ENCODE measurements at regions of chr7 and their contacts with region 1.

Region 1: GRCh38 chr7:25565949-25566348 is 337.7 kb upstream of the NPVF start:
- DNase-seq: peak; percentile 54
- H3K4me3 ChIP-seq: peak overlapping the region in 1 of 2 experiments; percentile 28; a peak in 1 of 4 replicates
- H3K27ac ChIP-seq: no peak overlapping the region
- H3K4me1 ChIP-seq: peaks cover 0 to 19% of the 10 kb centered on the region in 2 experiments; a peak in 2 of 4 replicates
- H3K27me3 ChIP-seq: no peaks in the 10 kb centered on the region
- CTCF ChIP-seq: peak; percentile 100
- EP300 ChIP-seq: no peak; a peak in 1 of 4 replicates
- RAD21 ChIP-seq: peak; percentile 100

Region 2: DNA sequence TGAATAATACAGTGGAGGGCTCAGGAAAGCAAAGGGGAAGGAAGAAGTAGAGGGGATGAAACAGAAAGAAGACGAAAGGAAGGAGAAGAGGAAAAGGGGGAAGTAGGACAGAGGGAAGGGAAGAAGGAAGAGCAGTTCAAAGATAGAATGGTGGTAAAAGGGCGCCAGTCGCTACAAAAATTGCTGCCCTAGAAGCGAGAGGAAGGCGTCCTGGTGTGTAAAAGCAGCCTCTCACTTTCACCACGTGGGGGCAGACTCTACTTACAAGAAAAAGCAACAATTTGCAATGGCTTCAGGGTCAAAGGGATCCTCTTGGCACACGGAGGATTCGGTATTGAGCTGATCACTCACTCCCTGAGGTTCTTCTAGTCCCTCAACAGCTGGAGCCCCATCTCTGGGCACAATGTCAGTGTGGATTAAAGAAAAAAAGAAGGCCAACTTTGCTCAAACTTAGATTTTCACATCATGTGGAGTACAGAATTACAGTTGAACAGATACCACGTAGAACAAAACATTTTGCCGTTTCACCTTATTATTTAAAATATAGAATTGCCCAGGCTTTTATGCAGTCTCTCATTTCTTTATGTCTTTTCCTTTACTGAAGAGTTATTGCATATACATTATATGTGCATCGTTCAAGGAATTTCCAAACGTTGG is 306.2 kb before region 1 on chr7:
- CTCF ChIA-PET with region 1: interaction called, 261 read pairs
- POLR2A ChIA-PET with region 1: no interaction called
- DNase-seq: peak; percentile 79
- H3K4me3 ChIP-seq: peak overlapping the region in 1 of 2 experiments; percentile 15; a peak in 1 of 4 replicates
- H3K27ac ChIP-seq: no peak overlapping the region
- H3K4me1 ChIP-seq: peaks cover 0 to 4% of the 10 kb centered on the region in 2 experiments; a peak in 2 of 4 replicates
- H3K27me3 ChIP-seq: peaks cover 10% of the 10 kb centered on the region; the same call in 1 of the 2 replicates
- CTCF ChIP-seq: peak; percentile 94
- EP300 ChIP-seq: no peak
- RAD21 ChIP-seq: peak; percentile 99

Region 3: DNA sequence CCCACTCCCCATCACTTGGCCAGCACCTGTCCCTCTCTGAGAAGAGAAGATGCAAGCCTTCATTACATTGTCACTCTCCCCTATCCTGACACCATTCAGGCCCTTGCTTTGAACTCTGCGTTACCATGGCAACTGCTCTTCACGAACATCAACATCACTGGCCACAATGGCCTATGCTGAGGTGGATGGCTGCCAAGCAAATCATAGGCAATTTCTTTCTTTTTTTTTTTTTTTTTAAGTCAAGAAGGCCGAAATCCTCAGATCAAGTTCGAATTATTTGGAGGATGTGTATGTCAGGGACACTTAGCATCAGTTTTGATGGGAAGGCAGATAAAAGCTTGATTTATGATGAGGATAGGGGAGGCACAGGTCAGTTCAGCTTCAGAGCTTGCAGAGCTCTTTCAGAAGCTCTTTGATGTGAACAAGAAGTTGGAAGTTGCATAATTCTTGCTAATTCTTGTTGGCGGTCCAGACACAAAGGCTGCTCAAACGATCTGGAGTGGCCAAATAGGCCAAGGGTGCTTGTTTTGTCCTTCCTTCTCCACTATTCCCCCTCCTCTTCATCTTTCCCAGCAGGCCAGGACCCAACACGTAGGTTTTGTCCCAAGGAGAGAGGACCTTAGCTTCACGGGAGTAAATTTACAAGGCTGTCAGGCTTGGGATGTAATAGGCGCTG is 157.8 kb before region 1 on chr7:
- CTCF ChIA-PET with region 1: interaction called, 766 read pairs
- POLR2A ChIA-PET with region 1: no interaction called
- DNase-seq: no peak
- H3K4me3 ChIP-seq: no peak overlapping the region
- H3K27ac ChIP-seq: no peak overlapping the region
- H3K4me1 ChIP-seq: no peaks in the 10 kb centered on the region; a peak in 1 of 4 replicates
- H3K27me3 ChIP-seq: no peaks in the 10 kb centered on the region
- CTCF ChIP-seq: no peak
- EP300 ChIP-seq: no peak
- RAD21 ChIP-seq: no peak

Region 4: DNA sequence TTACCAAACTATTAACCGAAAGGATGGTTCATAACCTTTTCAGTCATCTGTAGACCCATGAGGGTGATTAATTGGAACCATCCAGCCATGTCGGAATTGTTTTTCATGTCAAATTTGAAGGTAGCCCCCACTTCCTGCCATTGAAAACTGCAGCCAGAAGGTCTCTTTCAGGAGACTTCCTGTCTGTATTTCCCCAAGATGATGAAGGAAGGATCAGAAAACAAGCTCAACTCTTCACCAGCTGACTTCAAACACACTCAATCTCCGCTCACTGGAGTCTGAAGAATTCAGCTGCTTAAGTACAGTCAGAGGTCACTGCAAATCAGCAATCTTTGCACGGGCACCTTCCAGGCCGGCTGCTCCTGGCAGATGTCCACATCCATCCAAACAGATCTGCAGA is 45.9 kb before region 1 on chr7:
- CTCF ChIA-PET with region 1: interaction called, 13 read pairs
- POLR2A ChIA-PET with region 1: no interaction called
- DNase-seq: no peak
- H3K4me3 ChIP-seq: no peak overlapping the region
- H3K27ac ChIP-seq: no peak overlapping the region
- H3K4me1 ChIP-seq: no peaks in the 10 kb centered on the region; a peak in 1 of 4 replicates
- H3K27me3 ChIP-seq: no peaks in the 10 kb centered on the region
- CTCF ChIP-seq: no peak
- EP300 ChIP-seq: no peak
- RAD21 ChIP-seq: no peak

Region 5: GRCh38 chr7:25586513-25586912 is 20.6 kb after region 1 on chr7:
- CTCF ChIA-PET with region 1: interaction called, 10 read pairs
- POLR2A ChIA-PET with region 1: no interaction called
- DNase-seq: no peak
- H3K4me3 ChIP-seq: no peak overlapping the region
- H3K27ac ChIP-seq: no peak overlapping the region
- H3K4me1 ChIP-seq: no peaks in the 10 kb centered on the region; a peak in 1 of 4 replicates
- H3K27me3 ChIP-seq: no peaks in the 10 kb centered on the region
- CTCF ChIP-seq: no peak
- EP300 ChIP-seq: no peak
- RAD21 ChIP-seq: no peak

Region 6: DNA sequence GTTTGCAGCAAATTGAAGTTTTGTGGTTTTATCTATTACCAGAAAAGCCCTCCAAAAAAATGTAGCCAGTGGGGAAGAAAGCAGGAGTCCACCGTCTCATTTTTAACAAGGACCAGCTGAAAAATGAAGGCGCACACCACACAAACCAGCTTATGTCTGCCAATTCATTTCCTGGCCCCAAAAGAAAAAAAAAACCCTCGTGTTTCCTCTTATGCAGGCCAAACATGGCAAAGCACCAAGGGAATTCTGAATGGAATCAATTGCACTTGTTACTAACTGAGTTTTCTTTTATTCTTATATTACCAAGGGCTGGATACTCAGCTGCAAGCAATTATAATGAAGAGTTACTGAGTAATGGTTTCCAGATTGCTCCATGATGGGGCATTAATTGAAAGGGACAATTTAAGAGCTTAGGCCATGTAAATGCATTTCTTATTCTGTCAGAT is 90.7 kb after region 1 on chr7:
- CTCF ChIA-PET with region 1: interaction called, 50 read pairs
- POLR2A ChIA-PET with region 1: no interaction called
- DNase-seq: peak; percentile 34
- H3K4me3 ChIP-seq: no peak overlapping the region
- H3K27ac ChIP-seq: peak overlapping the region in 1 of 2 experiments; percentile 94; a peak in 2 of 4 replicates
- H3K4me1 ChIP-seq: peaks cover 0 to 59% of the 10 kb centered on the region in 2 experiments; a peak in 3 of 4 replicates
- H3K27me3 ChIP-seq: no peaks in the 10 kb centered on the region
- CTCF ChIP-seq: no peak
- EP300 ChIP-seq: peak in 1 of 2 experiments; percentile 92; a peak in 3 of 4 replicates
- RAD21 ChIP-seq: peak; percentile 14; the same call in 1 of the 2 replicates

Region 7: GRCh38 chr7:25851332-25852210 is 285.6 kb after region 1 on chr7:
- CTCF ChIA-PET with region 1: interaction called, 432 read pairs
- POLR2A ChIA-PET with region 1: no interaction called
- DNase-seq: peak; percentile 81
- H3K4me3 ChIP-seq: peak overlapping the region; percentile 21 to 38; a peak in 2 of 4 replicates
- H3K27ac ChIP-seq: no peak overlapping the region
- H3K4me1 ChIP-seq: peaks cover 0 to 24% of the 10 kb centered on the region in 2 experiments; a peak in 2 of 4 replicates
- H3K27me3 ChIP-seq: peaks cover 49% of the 10 kb centered on the region
- CTCF ChIP-seq: peak; percentile 92
- EP300 ChIP-seq: no peak
- RAD21 ChIP-seq: peak; percentile 99